Ovary (tissue), 10 donors: ENCODE measurements at regions of chr2 and their contacts with region 1.

Region 1: GRCh38 chr2:39379643-39380524 is 57.2 kb downstream of the MAP4K3 start:
- DNase-seq: no peak
- H3K4me3 ChIP-seq: no peak overlapping the region
- H3K27ac ChIP-seq: no peak overlapping the region
- H3K4me1 ChIP-seq: peaks cover 6% of the 10 kb centered on the region
- H3K27me3 ChIP-seq: no peaks in the 10 kb centered on the region
- CTCF ChIP-seq: peak; percentile 21 to 69 (median 51)
- EP300 ChIP-seq: no peak
- POLR2A ChIP-seq: no peak

Region 2: GRCh38 chr2:39436592-39437510 is 57.0 kb after region 1 on chr2 and contains the start of gene MAP4K3:
- intact Hi-C with region 1: loop called in 2 of 4 experiments (anchors 5 to 10 kb)
- DNase-seq: peak; percentile 93 to 95 (median 94)
- H3K4me3 ChIP-seq: peak within 1 kb of the TSS; percentile 90
- H3K27ac ChIP-seq: peak within 1 kb of the TSS; percentile 95 to 99
- H3K4me1 ChIP-seq: peaks cover 8% of the 10 kb centered on the region
- H3K27me3 ChIP-seq: no peaks in the 10 kb centered on the region
- CTCF ChIP-seq: no peak
- EP300 ChIP-seq: no peak
- POLR2A ChIP-seq: peak; percentile 84
- total RNA-seq, gene MAP4K3: 42.0 to 96.4 (median 55.0) TPM

Region 3: DNA sequence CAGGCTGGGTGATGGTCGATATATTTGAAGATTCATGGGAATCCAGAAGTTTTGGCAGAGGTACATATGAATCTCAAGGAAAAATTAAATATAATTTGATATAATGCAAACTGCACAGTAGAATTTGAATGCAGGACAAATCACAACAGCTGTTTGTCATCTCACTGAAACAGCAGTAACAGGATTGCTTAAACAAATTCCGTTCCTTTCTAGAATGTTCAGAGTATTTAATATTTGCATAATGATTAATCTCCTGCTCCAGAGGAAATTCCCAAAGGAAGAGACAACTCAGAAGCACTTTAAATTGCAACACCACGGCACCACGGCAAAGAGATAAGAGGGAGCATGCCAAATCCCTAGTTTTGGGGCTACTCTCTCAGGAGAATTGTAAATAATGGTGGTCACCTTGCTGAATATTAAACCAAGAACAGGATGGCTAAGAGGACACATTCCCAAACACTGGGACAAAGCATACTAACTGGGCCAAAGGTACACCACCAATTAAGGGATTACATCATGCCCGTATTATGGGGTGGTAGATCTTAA is 125.0 kb after region 1 on chr2:
- intact Hi-C with region 1: loop called in 2 of 4 experiments (anchors 10 kb)
- DNase-seq: peak in 1 of 5 donors; percentile 52
- H3K4me3 ChIP-seq: no peak overlapping the region
- H3K27ac ChIP-seq: no peak overlapping the region
- H3K4me1 ChIP-seq: peaks cover 6% of the 10 kb centered on the region
- H3K27me3 ChIP-seq: no peaks in the 10 kb centered on the region
- CTCF ChIP-seq: no peak
- EP300 ChIP-seq: no peak
- POLR2A ChIP-seq: no peak

Region 4: DNA sequence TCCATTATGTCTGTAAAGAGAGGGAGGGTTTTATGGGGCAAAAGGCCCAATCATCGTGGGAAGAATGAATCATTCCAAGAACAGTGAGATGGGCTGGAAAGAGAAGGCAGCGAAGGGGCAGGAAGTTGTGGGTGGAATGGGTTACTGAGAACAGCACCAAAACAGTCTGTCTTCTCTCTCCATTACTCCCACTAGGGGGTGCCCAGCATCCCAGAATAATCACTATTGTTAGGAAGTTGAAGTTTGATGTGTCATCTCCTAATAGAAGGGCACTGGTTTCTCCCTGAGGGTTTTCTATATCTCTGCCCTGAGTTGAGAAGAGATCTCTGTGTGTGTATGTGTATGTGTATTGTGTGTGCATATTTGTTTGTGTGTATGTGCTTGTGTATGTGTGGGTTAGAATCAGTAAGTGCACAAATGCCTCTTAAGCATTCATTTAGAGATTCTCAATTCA is 133.8 kb after region 1 on chr2:
- intact Hi-C with region 1: loop called in 2 of 4 experiments (anchors 10 kb)
- DNase-seq: peak in 4 of 5 donors; percentile 44 to 69 (median 55)
- H3K4me3 ChIP-seq: no peak overlapping the region
- H3K27ac ChIP-seq: peak overlapping the region in 1 of 2 donors; percentile 69
- H3K4me1 ChIP-seq: peaks cover 11% of the 10 kb centered on the region
- H3K27me3 ChIP-seq: no peaks in the 10 kb centered on the region
- CTCF ChIP-seq: peak in 1 of 3 donors; percentile 44
- EP300 ChIP-seq: no peak
- POLR2A ChIP-seq: no peak